Caco-2 (cell line): ENCODE measurements at regions of chr5 and their contacts with region 1.

Region 1: GRCh38 chr5:56900858-56901578 is 8.4 kb upstream of the SETD9 start:
- DNase-seq: peak in 1 of 2 experiments; percentile 71
- H3K4me3 ChIP-seq: no peak overlapping the region
- H3K4me3 Mint-ChIP-seq: no peak overlapping the region
- H3K27ac Mint-ChIP-seq: no peak overlapping the region
- H3K4me1 ChIP-seq: peaks cover 5% of the 10 kb centered on the region; the same call in 1 of the 2 replicates
- H3K4me1 Mint-ChIP-seq: no peaks in the 10 kb centered on the region
- H3K27me3 ChIP-seq: no peaks in the 10 kb centered on the region
- H3K27me3 Mint-ChIP-seq: no peaks in the 10 kb centered on the region
- CTCF ChIP-seq: peak; percentile 66 to 80

Region 2: DNA sequence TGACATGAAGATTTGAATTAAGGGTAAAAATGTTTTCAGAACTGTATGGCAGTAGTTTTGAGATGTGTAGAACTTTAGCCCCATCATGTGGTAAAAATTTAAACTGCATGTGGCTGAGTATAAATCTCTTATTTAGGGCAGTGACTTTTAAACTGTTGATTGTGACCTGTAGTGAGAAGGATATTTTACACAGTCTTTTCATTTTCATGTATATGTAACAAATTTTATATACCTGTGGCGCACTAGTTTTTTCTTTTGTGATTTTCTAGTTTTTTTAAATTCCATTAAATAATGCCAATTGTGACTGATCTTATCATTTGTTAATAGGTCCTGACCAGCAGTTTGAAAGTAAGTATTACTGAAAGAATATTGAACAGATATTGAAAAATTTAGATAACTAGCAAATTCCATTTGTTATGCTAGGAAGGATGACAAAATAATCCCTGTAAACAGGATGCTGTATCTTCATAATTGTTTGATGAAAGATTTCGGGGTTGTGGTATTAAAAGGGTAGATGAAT is 320.1 kb after region 1 on chr5:
- CTCF ChIA-PET with region 1: no interaction called
- POLR2A ChIA-PET with region 1: no interaction called
- intact Hi-C with region 1: loop called (anchors 2 kb)
- DNase-seq: peak in 1 of 2 experiments; percentile 69
- H3K4me3 ChIP-seq: no peak overlapping the region
- H3K4me3 Mint-ChIP-seq: no peak overlapping the region
- H3K27ac Mint-ChIP-seq: no peak overlapping the region
- H3K4me1 ChIP-seq: peaks cover 6% of the 10 kb centered on the region; the same call in 1 of the 2 replicates
- H3K4me1 Mint-ChIP-seq: no peaks in the 10 kb centered on the region
- H3K27me3 ChIP-seq: no peaks in the 10 kb centered on the region
- H3K27me3 Mint-ChIP-seq: no peaks in the 10 kb centered on the region
- CTCF ChIP-seq: peak; percentile 66 to 84

Region 3: GRCh38 chr5:57386958-57387357 is 485.9 kb after region 1 on chr5:
- CTCF ChIA-PET with region 1: no interaction called
- POLR2A ChIA-PET with region 1: no interaction called
- intact Hi-C with region 1: no loop called
- DNase-seq: peak in 1 of 2 experiments; percentile 13
- H3K4me3 ChIP-seq: no peak overlapping the region
- H3K4me3 Mint-ChIP-seq: no peak overlapping the region
- H3K27ac Mint-ChIP-seq: no peak overlapping the region
- H3K4me1 ChIP-seq: peaks cover 16% of the 10 kb centered on the region
- H3K4me1 Mint-ChIP-seq: peaks cover 14% of the 10 kb centered on the region
- H3K27me3 ChIP-seq: no peaks in the 10 kb centered on the region
- H3K27me3 Mint-ChIP-seq: no peaks in the 10 kb centered on the region
- CTCF ChIP-seq: no peak